ENCODE measurements at regions of chr2 and their contacts with region 1.

Region 1: DNA sequence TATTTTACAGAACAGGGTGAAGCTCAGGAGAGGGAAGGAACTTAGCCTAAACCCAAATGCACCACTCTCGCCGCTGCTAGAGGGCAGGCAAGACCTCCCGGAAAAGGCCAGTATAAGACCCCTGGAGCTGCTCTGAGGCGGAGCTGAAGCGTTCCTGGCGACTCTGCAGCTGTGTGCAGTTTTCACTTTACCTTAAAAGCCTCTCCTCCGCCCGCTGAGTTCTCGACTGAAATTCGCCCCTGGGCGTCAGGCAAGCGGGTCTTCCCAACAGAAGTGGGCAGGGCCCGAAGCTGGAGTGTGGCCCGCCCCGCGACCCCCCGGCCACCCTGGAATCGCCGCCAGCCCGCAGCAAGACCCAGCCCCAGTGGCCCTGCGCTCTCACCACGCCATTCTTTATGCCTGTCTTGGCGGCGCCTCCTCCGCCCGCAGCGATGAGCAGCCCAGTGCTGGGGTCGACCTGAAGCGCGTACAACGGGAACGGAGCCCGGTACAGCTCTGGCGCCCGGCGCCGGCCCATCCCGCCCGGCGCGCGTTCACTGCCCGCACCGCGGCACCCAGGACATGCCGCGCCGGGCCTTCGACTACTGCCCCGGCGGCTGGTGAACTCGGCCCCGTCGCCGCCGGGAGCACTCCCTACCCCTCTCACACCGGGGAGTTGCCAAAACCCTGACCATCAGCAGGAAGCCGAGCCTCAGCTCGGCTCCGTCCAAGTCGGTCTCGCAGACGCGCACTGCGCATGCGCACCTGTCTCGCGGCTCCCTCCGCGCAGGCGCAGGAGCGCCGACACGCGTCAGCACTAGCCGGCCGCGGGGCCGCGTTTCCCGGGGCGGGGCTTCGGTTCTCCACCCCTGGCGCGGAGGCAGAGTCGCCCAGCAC is at the start of gene PREB:
- DNase-seq: peak; percentile 98
- H3K4me3 ChIP-seq: peak within 1 kb of the TSS; percentile 79 to 100 (median 96)
- H3K27ac ChIP-seq: peak within 1 kb of the TSS; percentile 88 to 94 (median 92)
- H3K4me1 ChIP-seq: peaks cover 0 to 20% (median 19%) of the 10 kb centered on the region in 4 donors
- H3K27me3 ChIP-seq: no peaks in the 10 kb centered on the region
- CTCF ChIP-seq: peak in 1 of 4 experiments; percentile 8
- EP300 ChIP-seq: no peak
- POLR2A ChIP-seq: peak; percentile 82 to 85
- total RNA-seq, gene PREB: 47.6 to 58.5 (median 51.6) TPM

Region 2: GRCh38 chr2:27211829-27212627 is 77.9 kb after region 1 on chr2 and contains the starts of genes ATRAID and SLC5A6:
- intact Hi-C with region 1: loop called (anchors 2 kb)
- DNase-seq: peak; percentile 94
- H3K4me3 ChIP-seq: peak within 1 kb of the TSS; percentile 60 to 77 (median 74)
- H3K27ac ChIP-seq: peak within 1 kb of the TSS; percentile 92 to 95 (median 94)
- H3K4me1 ChIP-seq: peaks cover 0 to 31% (median 21%) of the 10 kb centered on the region in 4 donors
- H3K27me3 ChIP-seq: no peaks in the 10 kb centered on the region
- CTCF ChIP-seq: no peak
- EP300 ChIP-seq: no peak
- POLR2A ChIP-seq: peak in 1 of 2 donors; percentile 79
- total RNA-seq, gene ATRAID: 128 to 226 (median 159) TPM
- total RNA-seq, gene SLC5A6: 7.2 to 15.5 (median 12.9) TPM

Measured in sigmoid colon (tissue), 7 donors.